Vagina (tissue), 2 donors: ENCODE measurements at regions of chr14 and their contacts with region 1.

Region 1: GRCh38 chr14:104137297-104138097 is 890 bp upstream of the KIF26A start:
- DNase-seq: no peak
- H3K4me3 ChIP-seq: peak overlapping the region; percentile 52 to 56
- H3K27ac ChIP-seq: peak overlapping the region; percentile 15
- H3K4me1 ChIP-seq: peaks cover 48% of the 10 kb centered on the region
- H3K27me3 ChIP-seq: no peaks in the 10 kb centered on the region
- CTCF ChIP-seq: peak; percentile 68 to 93 (median 87)
- POLR2A ChIP-seq: no peak

Region 2: GRCh38 chr14:104291123-104292000 is 153.9 kb after region 1 on chr14:
- intact Hi-C with region 1: no loop called
- DNase-seq: no peak
- H3K4me3 ChIP-seq: no peak overlapping the region
- H3K27ac ChIP-seq: no peak overlapping the region
- H3K4me1 ChIP-seq: no peaks in the 10 kb centered on the region
- H3K27me3 ChIP-seq: no peaks in the 10 kb centered on the region
- CTCF ChIP-seq: no peak
- POLR2A ChIP-seq: no peak

Region 3: GRCh38 chr14:104563742-104564615 is 426.5 kb after region 1 on chr14:
- intact Hi-C with region 1: loop called (anchors 10 kb)
- DNase-seq: no peak
- H3K4me3 ChIP-seq: no peak overlapping the region
- H3K27ac ChIP-seq: no peak overlapping the region
- H3K4me1 ChIP-seq: peaks cover 12% of the 10 kb centered on the region
- H3K27me3 ChIP-seq: peaks cover 3% of the 10 kb centered on the region
- CTCF ChIP-seq: peak; percentile 70 to 85 (median 76)
- POLR2A ChIP-seq: no peak

Region 4: DNA sequence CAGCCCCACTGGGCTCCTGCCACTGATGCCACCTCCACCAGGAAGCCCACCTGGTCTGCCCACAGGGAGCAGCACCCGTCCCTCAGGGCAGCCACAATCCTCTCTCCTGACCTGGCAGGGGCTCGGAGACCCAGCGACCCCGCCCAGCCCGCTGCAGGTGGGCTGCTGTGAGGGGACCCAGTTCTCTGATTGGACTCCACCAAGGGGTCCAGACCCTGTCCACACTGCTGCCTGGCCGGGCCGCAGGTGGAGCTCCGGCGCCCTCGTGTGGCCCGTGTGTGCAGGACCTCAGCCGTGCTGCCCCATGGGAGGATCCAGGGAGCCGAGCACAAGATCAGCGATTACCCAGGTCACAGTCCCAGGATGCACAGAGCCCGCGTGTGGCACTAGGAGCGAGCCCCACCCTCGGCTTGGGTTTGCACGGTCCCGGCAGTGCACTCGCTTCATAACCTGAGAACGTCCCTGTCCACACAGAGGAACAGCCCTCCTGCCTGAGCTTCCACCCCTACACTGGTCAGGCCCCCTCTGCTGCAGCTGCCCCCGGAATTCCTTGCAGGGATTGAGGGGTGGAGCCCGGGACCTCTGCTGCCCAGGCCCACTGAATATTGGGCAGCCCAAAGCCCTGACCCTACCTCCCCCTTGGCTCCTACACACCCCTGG is 502.5 kb after region 1 on chr14:
- intact Hi-C with region 1: loop called (anchors 5 kb)
- DNase-seq: no peak
- H3K4me3 ChIP-seq: no peak overlapping the region
- H3K27ac ChIP-seq: no peak overlapping the region
- H3K4me1 ChIP-seq: no peaks in the 10 kb centered on the region
- H3K27me3 ChIP-seq: no peaks in the 10 kb centered on the region
- CTCF ChIP-seq: peak; percentile 47 to 58 (median 51)
- POLR2A ChIP-seq: no peak